Common myeloid progenitor, CD34-positive (primary cell): ENCODE measurements at regions of chr17 and their contacts with region 1.

Region 1: DNA sequence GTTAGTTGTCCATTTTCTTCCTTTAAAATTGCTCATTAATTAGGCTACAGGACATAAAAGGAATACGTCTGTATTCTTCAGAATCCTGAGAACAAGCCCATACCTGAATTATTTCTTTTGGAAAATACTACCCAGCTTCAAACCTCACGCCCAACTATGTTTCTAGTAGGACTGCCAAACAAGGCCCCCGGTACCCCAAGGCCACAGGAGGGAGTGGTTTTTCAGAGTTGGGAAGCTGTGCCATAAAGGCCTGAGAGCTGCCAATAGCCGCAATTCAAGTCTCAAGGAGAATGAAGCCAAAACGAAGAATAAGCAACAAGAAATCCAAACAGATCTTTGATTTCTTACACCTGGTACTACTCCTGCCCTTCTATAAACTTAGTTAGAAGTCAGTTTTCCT is 48.3 kb downstream of the UBE2G1 start:
- DNase-seq: no peak
- H3K4me3 ChIP-seq: no peak overlapping the region
- H3K27ac ChIP-seq: no peak overlapping the region
- H3K4me1 ChIP-seq: no peaks in the 10 kb centered on the region
- H3K27me3 ChIP-seq: no peaks in the 10 kb centered on the region

Region 2: DNA sequence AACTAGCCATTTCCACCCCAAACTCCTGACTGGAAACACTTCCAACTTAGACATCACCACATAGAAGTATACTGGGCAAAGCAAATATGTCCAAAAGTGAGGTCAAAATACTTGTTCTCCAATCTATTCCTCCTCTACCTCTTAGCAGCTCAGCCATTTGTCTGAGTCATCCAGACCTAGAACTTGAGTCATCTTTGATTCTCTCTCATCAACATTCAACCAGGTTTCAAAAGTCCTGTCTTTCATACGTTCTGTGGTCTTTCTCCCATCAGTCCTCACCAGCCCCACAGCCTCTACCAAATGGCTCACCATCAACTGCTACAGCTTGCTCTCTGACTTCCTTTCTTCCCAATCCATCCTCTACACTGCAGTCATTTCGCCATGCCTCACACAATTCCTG is 61.2 kb before region 1 on chr17:
- CTCF ChIA-PET with region 1: no interaction called
- POLR2A ChIA-PET with region 1: no interaction called
- DNase-seq: peak in 1 of 3 donors; percentile 6
- H3K4me3 ChIP-seq: no peak overlapping the region
- H3K27ac ChIP-seq: no peak overlapping the region
- H3K4me1 ChIP-seq: peaks cover 0 to 3% (median 0%) of the 10 kb centered on the region in 4 experiments
- H3K27me3 ChIP-seq: no peaks in the 10 kb centered on the region

Region 3: GRCh38 chr17:4304417-4305027 is 13.7 kb before region 1 on chr17:
- CTCF ChIA-PET with region 1: interaction called, 12 read pairs
- POLR2A ChIA-PET with region 1: no interaction called
- DNase-seq: peak; percentile 51 to 70 (median 69)
- H3K4me3 ChIP-seq: no peak overlapping the region
- H3K27ac ChIP-seq: no peak overlapping the region
- H3K4me1 ChIP-seq: no peaks in the 10 kb centered on the region
- H3K27me3 ChIP-seq: no peaks in the 10 kb centered on the region